ENCODE measurements at regions of chr10 and their contacts with region 1.

Region 1: DNA sequence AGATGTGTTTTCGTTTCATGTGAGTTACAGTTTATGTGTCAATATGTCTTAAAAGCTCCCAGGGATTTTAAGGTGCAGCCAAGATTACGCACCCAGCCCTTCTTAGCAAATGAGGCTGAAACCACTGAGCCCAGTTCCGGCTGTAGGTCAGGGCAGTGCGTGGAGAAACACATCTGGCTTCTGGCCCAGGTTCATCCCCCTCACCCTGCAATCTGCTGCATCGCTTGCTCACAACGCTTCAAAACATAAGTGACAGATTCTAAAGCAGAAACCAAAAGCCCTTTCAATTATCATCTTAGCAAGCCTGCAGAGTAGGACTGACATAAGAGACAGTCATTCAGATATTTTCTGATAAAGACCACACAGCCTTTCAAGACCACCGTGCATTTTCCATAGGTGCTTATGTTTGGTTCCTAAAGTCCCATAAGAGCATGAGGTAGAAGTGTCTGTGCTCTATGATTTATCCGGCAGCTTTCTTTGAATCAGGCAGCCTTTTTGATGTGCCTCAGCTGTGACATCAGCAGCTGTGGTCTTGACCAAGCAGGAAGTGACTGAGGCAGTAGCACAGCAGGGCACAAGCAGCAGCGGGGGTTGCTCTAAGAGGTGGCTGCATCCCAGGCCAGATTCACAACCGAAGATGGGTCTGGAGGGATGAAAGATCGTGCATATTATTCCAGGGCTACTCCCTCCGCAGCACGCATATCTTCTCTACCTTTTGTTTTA is 72.1 kb upstream of the LYZL2 start:
- DNase-seq: peak; percentile 87
- H3K4me3 ChIP-seq: peak overlapping the region; percentile 76
- H3K27ac ChIP-seq: peak overlapping the region; percentile 100
- H3K4me1 ChIP-seq: peaks cover 94% of the 10 kb centered on the region
- CTCF ChIP-seq: no peak

Region 2: GRCh38 chr10:29482591-29483431 is 1218.8 kb before region 1 on chr10:
- CTCF ChIA-PET with region 1: no interaction called
- POLR2A ChIA-PET with region 1: no interaction called
- intact Hi-C with region 1: loop called (anchors 5 kb)
- DNase-seq: peak; percentile 75
- H3K4me3 ChIP-seq: peak overlapping the region; percentile 68
- H3K27ac ChIP-seq: peak overlapping the region; percentile 94
- H3K4me1 ChIP-seq: peaks cover 95% of the 10 kb centered on the region
- CTCF ChIP-seq: peak; percentile 64

Region 3: GRCh38 chr10:30687698-30688219 is 13.9 kb before region 1 on chr10:
- CTCF ChIA-PET with region 1: interaction called, 3 read pairs
- POLR2A ChIA-PET with region 1: interaction called, 10 read pairs
- intact Hi-C with region 1: no loop called
- DNase-seq: peak; percentile 81
- H3K4me3 ChIP-seq: no peak overlapping the region
- H3K27ac ChIP-seq: no peak overlapping the region
- H3K4me1 ChIP-seq: peaks cover 21% of the 10 kb centered on the region
- CTCF ChIP-seq: peak; percentile 99

Region 4: GRCh38 chr10:30747633-30748032 is 46.0 kb after region 1 on chr10:
- CTCF ChIA-PET with region 1: no interaction called
- POLR2A ChIA-PET with region 1: no interaction called
- intact Hi-C with region 1: loop called (anchors 2 kb)
- DNase-seq: no peak
- H3K4me3 ChIP-seq: no peak overlapping the region
- H3K27ac ChIP-seq: no peak overlapping the region
- H3K4me1 ChIP-seq: no peaks in the 10 kb centered on the region
- CTCF ChIP-seq: no peak

Region 5: GRCh38 chr10:30783939-30784500 is 82.4 kb after region 1 on chr10:
- CTCF ChIA-PET with region 1: no interaction called
- POLR2A ChIA-PET with region 1: no interaction called
- intact Hi-C with region 1: no loop called
- DNase-seq: peak; percentile 63
- H3K4me3 ChIP-seq: no peak overlapping the region
- H3K27ac ChIP-seq: no peak overlapping the region
- H3K4me1 ChIP-seq: no peaks in the 10 kb centered on the region
- CTCF ChIP-seq: peak; percentile 89

Region 6: GRCh38 chr10:31318854-31319601 is 617.4 kb after region 1 on chr10 and contains the start of gene ZEB1:
- CTCF ChIA-PET with region 1: no interaction called
- POLR2A ChIA-PET with region 1: no interaction called
- intact Hi-C with region 1: loop called (anchors 2 kb)
- DNase-seq: peak; percentile 97
- H3K4me3 ChIP-seq: peak within 1 kb of the TSS; percentile 97
- H3K27ac ChIP-seq: peak within 1 kb of the TSS; percentile 94
- H3K4me1 ChIP-seq: peaks cover 32% of the 10 kb centered on the region
- CTCF ChIP-seq: peak; percentile 35; the same call in 1 of the 2 replicates
- total RNA-seq, gene ZEB1: 27.6 and 33.2 TPM in 2 replicates

Region 7: DNA sequence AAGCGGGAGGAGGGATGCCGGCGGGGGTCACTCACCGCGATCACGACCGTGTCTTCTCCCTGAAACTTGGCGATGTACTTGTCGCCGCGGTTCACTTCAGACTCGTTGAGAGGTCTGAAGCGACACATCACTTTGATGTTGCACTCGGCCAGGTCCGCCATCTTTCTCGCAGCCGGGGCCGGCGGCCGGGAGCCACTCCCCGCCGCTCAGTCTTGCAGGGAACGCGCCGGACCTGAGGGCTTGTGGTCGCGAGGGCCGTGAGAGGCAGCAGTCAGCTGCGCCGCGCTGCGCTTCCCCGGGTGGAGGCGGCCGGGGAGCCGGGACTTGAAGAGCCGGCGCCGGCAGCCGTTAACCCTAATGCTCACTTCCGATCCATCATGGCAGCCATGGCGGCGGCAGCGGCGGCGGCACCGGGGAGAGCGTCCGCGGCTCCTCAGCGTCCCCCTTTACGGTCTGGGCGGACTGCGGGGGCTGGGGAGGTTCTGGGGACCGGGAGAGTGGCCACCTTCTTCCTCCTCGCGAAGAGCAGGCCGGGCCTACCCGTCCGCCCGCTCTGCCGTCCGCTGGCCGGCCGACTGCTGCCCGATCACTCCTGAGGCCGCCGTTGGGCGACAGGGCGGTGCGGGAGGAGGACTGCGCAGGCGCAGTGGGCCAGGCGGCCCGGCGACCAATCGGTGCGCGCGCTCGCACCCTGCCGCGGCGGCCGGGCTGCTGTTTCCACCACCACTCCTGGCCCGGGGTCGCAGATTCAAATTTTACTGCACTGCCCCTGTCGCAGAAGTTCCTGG is 1354.4 kb after region 1 on chr10 and contains the start of gene KIF5B:
- CTCF ChIA-PET with region 1: no interaction called
- POLR2A ChIA-PET with region 1: no interaction called
- intact Hi-C with region 1: loop called (anchors 10 kb)
- DNase-seq: peak; percentile 92
- H3K4me3 ChIP-seq: peak within 1 kb of the TSS; percentile 87
- H3K27ac ChIP-seq: peak within 1 kb of the TSS; percentile 78
- H3K4me1 ChIP-seq: peaks cover 37% of the 10 kb centered on the region
- CTCF ChIP-seq: no peak
- total RNA-seq, gene KIF5B: 63.8 and 73.8 TPM in 2 replicates